ENCODE measurements at regions of chr7 and their contacts with region 1.

Region 1: DNA sequence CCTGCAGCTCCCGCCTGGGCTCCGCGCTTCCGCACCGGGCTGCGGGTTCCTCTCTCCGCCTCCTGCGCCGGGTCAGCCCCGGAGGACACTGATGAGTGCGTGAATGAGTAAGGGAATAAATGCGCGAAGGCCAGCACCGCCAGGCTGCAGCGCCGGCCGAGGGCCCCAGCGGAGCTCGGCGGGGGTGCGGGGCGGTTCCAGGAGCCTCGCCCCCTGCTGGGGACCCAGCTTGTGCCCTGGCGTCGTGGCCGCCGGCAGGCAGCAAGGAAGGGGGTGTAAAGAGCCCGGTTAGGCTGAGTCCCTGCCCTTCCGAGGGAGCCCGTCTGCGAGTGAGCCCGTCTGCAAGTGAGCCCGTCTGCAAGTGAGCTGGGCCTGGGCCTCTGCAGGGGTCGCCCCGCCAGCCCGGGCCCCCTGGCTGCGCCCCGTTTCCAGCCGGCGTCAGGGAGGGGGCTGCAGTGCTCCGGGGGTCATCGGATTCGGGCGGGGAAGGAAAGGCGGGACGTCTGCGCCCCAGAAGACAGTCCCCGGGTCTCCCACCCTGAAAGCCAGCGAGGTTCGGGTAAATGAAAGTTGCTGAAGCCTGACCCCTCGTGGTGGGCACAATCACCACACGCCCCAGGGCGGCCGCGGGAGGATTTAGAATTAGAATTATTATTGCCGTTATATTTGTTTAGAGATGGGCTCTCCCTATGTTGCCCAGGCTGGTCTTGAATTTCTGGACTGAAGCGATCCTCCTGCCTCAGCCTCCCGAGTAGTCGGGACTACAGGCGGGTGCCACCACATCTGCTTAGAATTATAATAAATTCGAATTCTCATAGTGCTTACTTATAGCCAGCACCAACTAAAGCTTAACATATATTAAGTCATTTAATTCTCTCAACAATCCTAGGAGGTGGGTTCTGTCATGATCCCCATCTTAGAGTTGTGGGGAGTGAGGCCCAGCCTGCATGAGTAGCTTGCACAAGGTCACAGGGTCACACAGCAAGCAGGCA is 8.6 kb upstream of the CRYGN start:
- DNase-seq: no peak
- H3K4me3 ChIP-seq: peak overlapping the region; percentile 51
- H3K27ac ChIP-seq: no peak overlapping the region
- H3K27me3 ChIP-seq: peaks cover 4% of the 10 kb centered on the region
- CTCF ChIP-seq: peak; percentile 77

Region 2: DNA sequence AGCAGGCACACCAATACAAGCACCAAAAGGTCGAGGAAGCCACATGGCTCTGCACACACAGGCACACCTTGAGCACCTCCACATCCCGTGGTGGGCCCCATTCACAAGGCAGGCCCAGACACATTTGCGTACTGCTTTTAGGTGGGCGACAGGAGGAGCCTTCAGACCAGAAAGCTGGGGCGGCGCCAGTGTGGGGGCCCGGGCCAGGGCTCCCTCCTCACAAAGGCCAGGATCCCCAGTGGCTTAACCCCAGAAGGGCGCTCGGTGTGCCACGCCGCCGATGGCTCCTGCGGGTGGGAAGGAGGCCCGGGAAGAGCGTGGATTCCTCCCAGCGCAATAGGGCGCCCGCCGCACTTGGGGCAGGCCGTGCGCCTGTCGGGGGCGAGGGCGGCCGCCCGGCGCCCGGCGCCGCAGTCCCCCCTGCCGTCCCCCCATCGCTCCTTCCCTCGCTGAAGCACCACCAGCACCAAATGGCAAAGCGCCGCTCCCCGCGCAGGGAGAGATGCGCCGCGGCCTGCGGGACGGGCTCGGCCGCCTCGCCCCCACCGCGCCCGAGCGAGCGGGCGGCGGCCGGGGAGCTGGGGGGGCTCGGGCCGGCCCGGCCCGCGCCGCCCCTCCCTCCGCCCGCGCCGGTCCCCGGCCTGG is 197.1 kb before region 1 on chr7:
- CTCF ChIA-PET with region 1: no interaction called
- POLR2A ChIA-PET with region 1: no interaction called
- DNase-seq: no peak
- H3K4me3 ChIP-seq: peak overlapping the region; percentile 61
- H3K27ac ChIP-seq: peak overlapping the region; percentile 52
- H3K27me3 ChIP-seq: peaks cover 5% of the 10 kb centered on the region
- CTCF ChIP-seq: no peak

Region 3: DNA sequence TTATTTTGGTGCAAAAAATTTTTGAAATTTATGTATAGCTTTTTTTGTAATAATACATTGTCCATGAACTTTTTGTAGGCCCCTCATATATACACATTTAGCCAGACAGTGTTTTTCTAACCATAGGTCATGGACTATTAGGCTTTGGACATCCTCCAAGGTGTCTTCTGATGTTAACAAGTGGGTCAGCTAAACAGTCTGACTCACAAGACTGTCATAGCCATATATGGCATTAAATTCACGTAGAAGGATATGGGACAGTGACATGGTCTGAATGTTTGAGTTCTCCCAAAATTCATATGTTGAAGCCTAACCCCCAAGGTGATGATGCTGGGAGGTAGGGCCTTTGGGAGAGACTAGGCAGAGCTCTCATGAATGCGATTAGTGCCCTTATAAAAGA is 120.9 kb before region 1 on chr7:
- CTCF ChIA-PET with region 1: interaction called, 10 read pairs
- POLR2A ChIA-PET with region 1: no interaction called
- DNase-seq: peak; percentile 39
- H3K4me3 ChIP-seq: no peak overlapping the region
- H3K27ac ChIP-seq: no peak overlapping the region
- H3K27me3 ChIP-seq: peaks cover 6% of the 10 kb centered on the region
- CTCF ChIP-seq: no peak

Region 4: GRCh38 chr7:151361193-151361959 is 87.2 kb before region 1 on chr7:
- CTCF ChIA-PET with region 1: interaction called, 109 read pairs
- POLR2A ChIA-PET with region 1: interaction called, 17 read pairs
- DNase-seq: no peak
- H3K4me3 ChIP-seq: no peak overlapping the region
- H3K27ac ChIP-seq: no peak overlapping the region
- H3K27me3 ChIP-seq: no peaks in the 10 kb centered on the region
- CTCF ChIP-seq: no peak

Region 5: DNA sequence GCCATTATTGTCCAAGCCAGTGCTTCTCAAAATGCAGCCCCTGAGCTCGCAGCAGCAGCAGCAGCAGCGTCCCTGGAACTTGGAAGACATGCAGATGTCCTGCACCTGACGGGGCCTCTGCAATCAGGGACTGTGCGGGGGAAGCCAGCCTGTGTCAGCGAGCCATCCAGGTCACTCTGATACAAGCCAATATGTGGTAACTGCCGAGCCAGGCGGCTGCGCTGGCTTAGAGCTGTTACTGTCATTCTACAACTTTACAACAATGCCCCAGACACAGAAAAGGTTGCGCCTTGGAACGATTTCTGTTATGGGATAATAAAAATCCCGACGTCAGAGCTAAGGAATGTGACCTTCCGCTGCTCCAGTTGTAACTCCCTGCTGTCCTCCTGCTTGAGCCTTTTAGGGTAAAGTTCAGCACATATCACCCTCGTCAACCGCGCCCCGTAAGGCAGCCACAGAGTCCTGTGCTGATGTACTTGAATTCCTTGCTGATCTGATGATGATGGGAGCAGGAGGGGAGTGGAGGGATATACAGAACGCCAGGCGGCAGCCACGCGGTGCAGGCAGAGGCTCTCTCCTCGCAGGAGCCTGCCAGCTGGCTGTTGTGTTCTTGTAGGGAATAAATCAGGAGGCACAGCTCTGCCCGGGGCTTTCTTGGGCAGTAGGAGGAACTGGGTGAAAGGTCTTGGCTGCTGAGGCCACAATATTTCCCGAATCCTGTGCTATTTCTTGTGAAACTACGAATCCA is 11.3 kb after region 1 on chr7:
- CTCF ChIA-PET with region 1: interaction called, 31 read pairs
- POLR2A ChIA-PET with region 1: interaction called, 3 read pairs
- DNase-seq: peak; percentile 72
- H3K4me3 ChIP-seq: peak overlapping the region; percentile 39
- H3K27ac ChIP-seq: peak overlapping the region; percentile 86
- H3K27me3 ChIP-seq: no peaks in the 10 kb centered on the region
- CTCF ChIP-seq: peak; percentile 53

Region 6: GRCh38 chr7:151759591-151760042 is 311.1 kb after region 1 on chr7:
- CTCF ChIA-PET with region 1: interaction called, 34 read pairs
- POLR2A ChIA-PET with region 1: no interaction called
- DNase-seq: no peak
- H3K4me3 ChIP-seq: no peak overlapping the region
- H3K27ac ChIP-seq: no peak overlapping the region
- H3K27me3 ChIP-seq: peaks cover 33% of the 10 kb centered on the region
- CTCF ChIP-seq: peak; percentile 89